Activated CD4-positive, alpha-beta T cell treated with anti-CD3 and anti-CD28 coated beads, Interleukin-2, amount 10 ng/mL, durations not matched to agents 24 days and 14 days (primary cell): ENCODE measurements at regions of chr19 and their contacts with region 1.

Region 1: GRCh38 chr19:19320362-19321142 is at the starts of genes MAU2 and SUGP1:
- DNase-seq: peak; percentile 97
- H3K4me3 Mint-ChIP-seq: peak within 1 kb of the TSS; percentile 89
- H3K27ac Mint-ChIP-seq: peak within 1 kb of the TSS; percentile 99
- H3K4me1 Mint-ChIP-seq: peaks cover 35% of the 10 kb centered on the region
- H3K27me3 Mint-ChIP-seq: no peaks in the 10 kb centered on the region
- total RNA-seq, gene MAU2: 61.8 and 73.0 TPM in 2 replicates
- total RNA-seq, gene SUGP1: 71.2 and 72.0 TPM in 2 replicates

Region 2: GRCh38 chr19:19145684-19146608 is 174.6 kb before region 1 on chr19:
- intact Hi-C with region 1: loop called (anchors 1 kb)
- DNase-seq: peak; percentile 97
- H3K4me3 Mint-ChIP-seq: no peak overlapping the region
- H3K27ac Mint-ChIP-seq: no peak overlapping the region
- H3K4me1 Mint-ChIP-seq: peaks cover 2% of the 10 kb centered on the region
- H3K27me3 Mint-ChIP-seq: no peaks in the 10 kb centered on the region

Region 3: GRCh38 chr19:19192078-19192882 is 128.3 kb before region 1 on chr19 and contains the starts of genes BORCS8 and RFXANK:
- intact Hi-C with region 1: loop called (anchors 1 kb)
- DNase-seq: peak; percentile 100
- H3K4me3 Mint-ChIP-seq: peak within 1 kb of the TSS; percentile 99
- H3K27ac Mint-ChIP-seq: peak within 1 kb of the TSS; percentile 98
- H3K4me1 Mint-ChIP-seq: peaks cover 32% of the 10 kb centered on the region
- H3K27me3 Mint-ChIP-seq: no peaks in the 10 kb centered on the region
- total RNA-seq, gene BORCS8: 34.8 and 38.9 TPM in 2 replicates
- total RNA-seq, gene RFXANK: 111 and 113 TPM in 2 replicates

Region 4: GRCh38 chr19:19294914-19295313 is 25.6 kb before region 1 on chr19:
- intact Hi-C with region 1: no loop called
- DNase-seq: no peak
- H3K4me3 Mint-ChIP-seq: no peak overlapping the region
- H3K27ac Mint-ChIP-seq: no peak overlapping the region
- H3K4me1 Mint-ChIP-seq: no peaks in the 10 kb centered on the region
- H3K27me3 Mint-ChIP-seq: no peaks in the 10 kb centered on the region

Region 5: GRCh38 chr19:19385108-19385899 is 64.8 kb after region 1 on chr19:
- intact Hi-C with region 1: loop called (anchors 1 kb)
- DNase-seq: peak; percentile 100
- H3K4me3 Mint-ChIP-seq: peak overlapping the region; percentile 85
- H3K27ac Mint-ChIP-seq: peak overlapping the region; percentile 89
- H3K4me1 Mint-ChIP-seq: peaks cover 36% of the 10 kb centered on the region
- H3K27me3 Mint-ChIP-seq: no peaks in the 10 kb centered on the region

Region 6: DNA sequence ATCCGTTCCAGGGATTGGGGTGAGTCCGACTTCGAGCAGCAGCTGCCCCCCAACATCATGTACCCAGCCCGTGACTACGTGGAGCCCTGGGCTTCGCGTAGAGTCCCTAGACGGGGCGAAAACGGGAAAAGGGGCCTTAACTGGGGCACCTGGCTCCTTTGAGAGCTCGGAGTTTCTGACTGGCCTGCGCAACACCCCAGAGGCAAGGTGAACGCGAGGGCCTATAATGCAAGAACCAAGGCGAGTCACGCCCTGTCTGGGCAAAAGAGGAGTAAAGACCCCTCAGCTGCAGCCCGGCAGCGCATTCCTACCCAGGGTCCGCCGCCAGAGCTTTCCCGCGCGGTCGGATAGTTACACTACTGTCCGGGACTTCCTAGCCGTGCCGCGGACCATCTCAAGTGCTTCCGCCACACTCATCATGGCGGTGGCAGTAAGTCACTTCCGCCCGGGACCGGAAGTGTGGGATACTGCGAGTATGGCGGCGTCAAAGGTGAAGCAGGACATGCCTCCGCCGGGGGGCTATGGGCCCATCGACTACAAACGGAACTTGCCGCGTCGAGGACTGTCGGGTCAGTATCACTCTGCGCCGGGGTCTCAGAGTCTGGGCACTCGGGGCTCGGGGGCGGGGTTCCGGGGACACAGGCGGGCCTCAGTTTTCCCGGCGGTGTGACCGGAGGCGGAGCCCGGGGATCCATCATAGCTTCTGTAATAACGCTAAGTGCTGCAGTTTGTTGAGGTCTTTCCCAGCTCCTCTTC is 195.4 kb after region 1 on chr19 and contains the start of gene NDUFA13:
- intact Hi-C with region 1: loop called (anchors 1 kb)
- DNase-seq: peak; percentile 99
- H3K4me3 Mint-ChIP-seq: peak within 1 kb of the TSS; percentile 96
- H3K27ac Mint-ChIP-seq: peak within 1 kb of the TSS; percentile 95
- H3K4me1 Mint-ChIP-seq: peaks cover 9% of the 10 kb centered on the region
- H3K27me3 Mint-ChIP-seq: no peaks in the 10 kb centered on the region
- total RNA-seq, gene NDUFA13: 370 and 391 TPM in 2 replicates